ENCODE measurements at regions of chr10 and their contacts with region 1.

Region 1: GRCh38 chr10:121734589-121735045 is 136.4 kb upstream of the FGFR2 start:
- DNase-seq: no peak
- ATAC-seq: peak in 1 of 2 donors; percentile 23

Region 2: GRCh38 chr10:121608469-121609190 is 126.0 kb before region 1 on chr10:
- intact Hi-C with region 1: loop called in 1 of 2 experiments (anchors 10 kb)
- DNase-seq: peak; percentile 42
- ATAC-seq: peak; percentile 90 to 97

Region 3: DNA sequence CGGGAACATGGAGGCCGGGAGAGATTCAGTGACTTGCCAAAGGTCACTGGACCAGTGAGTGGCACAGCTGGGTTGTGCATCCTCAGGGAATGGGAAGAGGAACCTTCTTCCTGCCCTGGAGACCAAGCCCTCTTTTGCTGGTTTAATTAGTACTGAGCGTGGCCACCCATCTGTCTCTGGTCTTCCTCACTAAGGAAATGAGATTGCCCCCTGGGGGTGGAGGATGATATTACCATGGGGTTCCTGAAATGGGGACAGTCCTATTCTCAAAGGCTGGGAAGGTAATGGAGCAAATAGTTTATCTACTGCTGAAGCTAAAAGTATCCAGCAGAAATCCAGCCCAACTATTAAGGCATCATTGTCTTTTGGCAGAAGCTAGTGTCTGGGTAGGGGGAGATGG is 37.8 kb before region 1 on chr10:
- intact Hi-C with region 1: no loop called
- DNase-seq: no peak
- ATAC-seq: no peak

Measured in left cardiac atrium (tissue), 4 donors.